Dendritic cell treated with granulocyte-macrophage colony-stimulating factor and Interleukin-4, amounts not matched to agents 40 ng/mL and 50 ng/mL, for 4 days (primary cell): ENCODE measurements at regions of chr11 and their contacts with region 1.

Region 1: GRCh38 chr11:14519917-14520746 is at the start of gene PSMA1:
- H3K4me3 Mint-ChIP-seq: peak within 1 kb of the TSS; percentile 89
- H3K27ac Mint-ChIP-seq: peak within 1 kb of the TSS; percentile 97
- H3K4me1 Mint-ChIP-seq: peaks cover 16% of the 10 kb centered on the region
- H3K27me3 Mint-ChIP-seq: no peaks in the 10 kb centered on the region

Region 2: DNA sequence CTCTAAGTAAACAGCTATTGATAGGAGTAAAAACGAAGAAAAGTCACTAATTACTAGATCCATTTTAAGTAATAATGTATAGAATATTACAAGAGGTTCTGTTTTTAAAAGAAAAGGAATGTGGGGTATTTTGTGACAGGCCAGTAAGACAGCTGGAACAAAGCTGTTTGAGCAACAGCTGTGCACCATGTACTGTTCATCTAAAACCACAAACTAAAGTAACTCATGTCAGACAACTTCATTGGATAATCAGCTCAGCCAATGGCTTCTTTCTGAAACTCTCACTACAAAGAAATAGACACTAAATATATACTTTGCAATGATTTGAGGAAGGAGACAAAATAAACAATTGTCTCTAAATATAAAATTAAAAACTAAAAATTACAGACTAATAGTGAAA is 177.2 kb before region 1 on chr11:
- intact Hi-C with region 1: no loop called
- H3K4me3 Mint-ChIP-seq: no peak overlapping the region
- H3K27ac Mint-ChIP-seq: no peak overlapping the region
- H3K4me1 Mint-ChIP-seq: no peaks in the 10 kb centered on the region
- H3K27me3 Mint-ChIP-seq: no peaks in the 10 kb centered on the region

Region 3: DNA sequence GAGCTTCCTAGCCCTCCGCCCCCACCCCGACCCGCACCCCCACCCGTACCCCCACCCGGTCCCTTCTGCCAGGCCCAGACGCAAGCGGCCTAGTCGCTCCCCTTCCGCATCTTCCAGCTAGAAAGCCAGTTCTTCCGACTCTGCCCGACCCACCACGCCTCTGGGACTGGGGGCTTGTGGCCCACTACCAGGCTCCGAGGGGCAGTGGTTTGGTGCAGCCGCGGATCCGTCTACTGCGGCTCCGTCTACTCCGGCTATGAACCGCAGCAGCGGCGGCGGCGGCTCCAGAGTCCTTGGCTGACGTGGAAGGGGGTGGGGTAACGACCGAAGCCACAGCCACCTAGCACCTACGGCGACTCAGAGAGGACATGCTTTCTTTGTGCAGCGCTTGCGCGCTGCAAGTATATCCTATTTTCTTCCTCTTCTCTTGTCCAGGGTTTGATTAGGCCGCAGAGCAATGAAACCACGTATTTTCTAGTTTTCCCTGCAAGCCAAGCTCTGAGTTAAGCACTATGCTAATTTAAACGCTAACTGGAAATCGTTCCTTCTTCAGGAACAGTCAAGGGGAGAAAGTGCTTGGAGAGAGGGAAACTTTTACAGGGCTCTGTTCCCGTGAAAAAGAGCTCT is 20.5 kb before region 1 on chr11 and contains the start of gene COPB1:
- intact Hi-C with region 1: loop called (anchors 1 kb)
- H3K4me3 Mint-ChIP-seq: peak within 1 kb of the TSS; percentile 95
- H3K27ac Mint-ChIP-seq: peak within 1 kb of the TSS; percentile 91
- H3K4me1 Mint-ChIP-seq: peaks cover 20% of the 10 kb centered on the region
- H3K27me3 Mint-ChIP-seq: no peaks in the 10 kb centered on the region

Region 4: DNA sequence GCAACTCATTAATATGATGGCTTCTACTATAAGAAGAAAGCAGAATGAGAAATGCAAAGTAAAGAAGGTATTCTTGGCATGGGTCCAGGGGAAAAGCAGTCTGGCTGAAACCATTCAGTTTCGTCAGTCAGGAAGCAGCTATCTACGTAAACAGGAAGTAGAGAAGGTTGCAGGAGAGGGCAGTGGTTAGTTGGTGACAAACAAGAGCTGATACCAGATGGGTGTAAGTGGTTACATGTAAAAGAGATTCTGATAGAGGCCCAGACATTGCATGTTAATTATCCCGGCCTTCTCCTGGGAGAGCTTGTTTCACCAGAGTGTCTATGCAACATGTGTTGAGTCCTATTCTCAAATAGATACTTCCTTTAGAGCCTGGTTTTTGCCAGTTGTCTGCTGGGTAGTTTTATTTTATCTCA is 58.4 kb after region 1 on chr11:
- intact Hi-C with region 1: no loop called
- H3K4me3 Mint-ChIP-seq: no peak overlapping the region
- H3K27ac Mint-ChIP-seq: no peak overlapping the region
- H3K4me1 Mint-ChIP-seq: peaks cover 20% of the 10 kb centered on the region
- H3K27me3 Mint-ChIP-seq: no peaks in the 10 kb centered on the region

Region 5: DNA sequence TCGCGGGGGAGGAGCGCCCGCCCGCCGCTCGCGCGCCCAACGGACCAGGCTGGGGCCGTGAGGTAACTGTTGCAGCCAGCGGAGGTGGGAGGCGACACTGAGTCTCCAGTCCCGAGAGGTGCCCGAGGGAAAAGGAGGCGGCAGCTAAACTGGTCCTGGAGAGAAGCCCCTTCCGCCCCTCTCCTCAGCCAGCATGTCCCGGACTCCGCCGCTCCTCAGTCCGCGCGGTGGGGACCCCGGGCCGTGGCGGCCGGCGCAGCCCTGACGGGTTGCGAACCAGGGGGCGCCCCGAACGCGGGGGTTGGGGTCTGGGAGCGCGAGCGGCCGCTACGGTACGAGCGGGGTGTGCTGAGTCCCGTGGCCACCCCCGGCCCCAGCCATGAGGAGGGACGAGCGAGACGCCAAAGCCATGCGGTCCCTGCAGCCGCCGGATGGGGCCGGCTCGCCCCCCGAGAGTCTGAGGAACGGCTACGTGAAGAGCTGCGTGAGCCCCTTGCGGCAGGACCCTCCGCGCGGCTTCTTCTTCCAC is 123.6 kb after region 1 on chr11 and contains the start of gene PDE3B:
- intact Hi-C with region 1: loop called (anchors 5 kb)
- H3K4me3 Mint-ChIP-seq: peak within 1 kb of the TSS; percentile 87
- H3K27ac Mint-ChIP-seq: peak within 1 kb of the TSS; percentile 81
- H3K4me1 Mint-ChIP-seq: peaks cover 23% of the 10 kb centered on the region
- H3K27me3 Mint-ChIP-seq: peaks cover 1% of the 10 kb centered on the region

Region 6: DNA sequence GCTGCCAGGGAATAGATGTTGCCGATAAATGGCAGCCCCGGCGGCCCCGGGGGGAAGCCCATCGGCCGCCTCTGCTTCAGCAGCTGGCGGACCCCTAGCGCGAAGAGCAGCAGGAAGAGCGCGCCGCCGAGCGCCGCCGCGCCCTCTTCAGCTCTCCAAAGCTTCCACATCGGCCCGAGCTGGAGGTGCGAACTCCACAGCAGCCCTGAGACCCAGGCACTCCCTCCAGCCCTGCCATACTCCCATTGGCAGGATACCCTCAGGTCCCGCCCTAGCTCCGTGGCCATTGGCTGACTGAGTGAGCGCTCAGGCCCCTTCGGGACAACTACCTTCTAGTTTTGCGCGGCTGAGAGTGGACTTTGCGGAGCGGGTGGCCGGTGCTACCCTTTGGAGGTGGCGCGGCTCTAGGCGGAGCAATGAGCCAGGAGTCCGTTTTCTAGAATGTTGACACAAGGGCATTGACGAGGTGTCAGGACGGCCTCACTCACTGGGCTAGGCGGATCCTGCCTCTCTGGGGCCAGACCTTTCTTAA is 372.0 kb after region 1 on chr11 and contains the start of gene CYP2R1:
- intact Hi-C with region 1: loop called (anchors 5 kb)
- H3K4me3 Mint-ChIP-seq: peak within 1 kb of the TSS; percentile 98
- H3K27ac Mint-ChIP-seq: peak within 1 kb of the TSS; percentile 91
- H3K4me1 Mint-ChIP-seq: peaks cover 62% of the 10 kb centered on the region
- H3K27me3 Mint-ChIP-seq: no peaks in the 10 kb centered on the region